ENCODE measurements at regions of chr7 and their contacts with region 1.

Region 1: GRCh38 chr7:85030893-85031292 is 156.0 kb downstream of the SEMA3D start:
- DNase-seq: no peak
- ATAC-seq: no peak
- H3K4me3 ChIP-seq: no peak overlapping the region
- H3K27ac ChIP-seq: no peak overlapping the region
- H3K4me1 ChIP-seq: no peaks in the 10 kb centered on the region
- H3K27me3 ChIP-seq: peaks cover 0 to 4% (median 0%) of the 10 kb centered on the region in 9 donors
- CTCF ChIP-seq: peak in 10 of 12 donors; percentile 22 to 60 (median 45)
- POLR2A ChIP-seq: no peak

Region 2: DNA sequence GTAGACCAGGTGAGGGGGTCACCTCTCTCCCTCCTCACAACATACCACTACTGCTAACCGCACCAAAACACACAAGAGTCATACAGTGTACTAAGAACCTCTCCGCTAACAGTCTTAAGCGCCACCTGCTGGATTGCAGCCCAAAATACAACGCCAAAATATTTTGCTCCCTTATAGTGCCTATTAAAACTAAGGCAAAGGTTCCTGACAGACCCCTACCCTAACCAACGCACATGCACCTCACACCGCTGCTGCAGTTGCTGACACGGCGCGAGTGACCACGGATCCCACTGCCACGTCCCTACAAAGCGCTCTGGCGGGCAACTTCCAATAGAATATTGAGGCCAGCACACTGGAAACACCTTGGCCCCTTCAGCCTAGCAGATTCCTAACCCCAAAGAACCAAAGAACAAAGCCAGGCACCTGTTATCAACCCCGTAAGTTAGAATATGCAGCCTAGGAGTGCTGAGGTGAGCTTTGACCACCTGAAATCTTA is 719.6 kb after region 1 on chr7:
- intact Hi-C with region 1: loop called in 1 of 10 experiments (anchors 10 kb)
- DNase-seq: no peak
- ATAC-seq: peak in 3 of 4 donors; percentile 22 to 61 (median 24)
- H3K4me3 ChIP-seq: no peak overlapping the region
- H3K27ac ChIP-seq: no peak overlapping the region
- H3K4me1 ChIP-seq: no peaks in the 10 kb centered on the region
- H3K27me3 ChIP-seq: no peaks in the 10 kb centered on the region
- CTCF ChIP-seq: peak in 11 of 12 donors; percentile 9 to 53 (median 38)
- POLR2A ChIP-seq: no peak

Region 3: DNA sequence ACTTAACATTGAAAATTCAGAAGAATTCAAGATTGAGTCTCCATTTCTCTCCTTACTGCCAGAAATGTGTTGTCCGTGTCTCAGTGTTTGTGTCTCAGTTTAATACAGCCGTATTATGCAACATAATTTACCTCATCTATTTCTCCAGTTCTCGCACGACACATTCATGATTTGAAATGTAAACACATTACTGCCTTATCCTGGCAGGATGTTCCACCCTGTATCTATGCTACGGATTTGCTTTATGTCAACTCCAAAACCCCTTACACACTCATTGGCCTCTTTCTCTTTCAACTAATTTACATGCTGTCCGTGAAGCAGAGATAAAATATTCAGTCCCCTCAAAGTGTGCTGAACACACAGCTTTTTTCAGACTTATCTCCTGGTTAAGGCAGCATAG is 809.7 kb after region 1 on chr7:
- intact Hi-C with region 1: loop called in 1 of 10 experiments (anchors 10 kb)
- DNase-seq: no peak
- ATAC-seq: no peak
- H3K4me3 ChIP-seq: no peak overlapping the region
- H3K27ac ChIP-seq: no peak overlapping the region
- H3K4me1 ChIP-seq: no peaks in the 10 kb centered on the region
- H3K27me3 ChIP-seq: peaks cover 0 to 5% (median 0%) of the 10 kb centered on the region in 9 donors
- CTCF ChIP-seq: no peak
- POLR2A ChIP-seq: no peak

Region 4: GRCh38 chr7:85851571-85852193 is 820.8 kb after region 1 on chr7:
- intact Hi-C with region 1: loop called in 2 of 10 experiments (anchors 5 to 10 kb)
- DNase-seq: no peak
- ATAC-seq: no peak
- H3K4me3 ChIP-seq: no peak overlapping the region
- H3K27ac ChIP-seq: no peak overlapping the region
- H3K4me1 ChIP-seq: no peaks in the 10 kb centered on the region
- H3K27me3 ChIP-seq: no peaks in the 10 kb centered on the region
- CTCF ChIP-seq: peak in 9 of 12 donors; percentile 17 to 45 (median 25)
- POLR2A ChIP-seq: no peak